ENCODE measurements at regions of chr1 and their contacts with region 1.

Region 1: GRCh38 chr1:89524369-89525168 is at the start of gene LRRC8B:
- DNase-seq: peak; percentile 95 to 97 (median 95)
- ATAC-seq: peak; percentile 99 to 100 (median 100)
- H3K4me3 ChIP-seq: peak within 1 kb of the TSS; percentile 76 to 97 (median 94)
- H3K27ac ChIP-seq: peak within 1 kb of the TSS; percentile 58 to 95 (median 91)
- H3K4me1 ChIP-seq: peaks cover 0 to 46% (median 12%) of the 10 kb centered on the region in 12 donors
- H3K27me3 ChIP-seq: no peaks in the 10 kb centered on the region
- CTCF ChIP-seq: no peak
- POLR2A ChIP-seq: peak in 1 of 2 donors; percentile 73
- total RNA-seq, gene LRRC8B: 3.4 to 10.4 (median 5.0) TPM

Region 2: GRCh38 chr1:89489047-89489729 is 35.4 kb before region 1 on chr1:
- intact Hi-C with region 1: no loop called
- DNase-seq: no peak
- ATAC-seq: no peak
- H3K4me3 ChIP-seq: no peak overlapping the region
- H3K27ac ChIP-seq: no peak overlapping the region
- H3K4me1 ChIP-seq: peaks cover 0 to 12% (median 0%) of the 10 kb centered on the region in 12 donors
- H3K27me3 ChIP-seq: no peaks in the 10 kb centered on the region
- CTCF ChIP-seq: no peak
- POLR2A ChIP-seq: no peak

Region 3: GRCh38 chr1:89567797-89568196 is 43.2 kb after region 1 on chr1:
- intact Hi-C with region 1: loop called in 1 of 10 experiments (anchors 2 kb)
- DNase-seq: no peak
- ATAC-seq: no peak
- H3K4me3 ChIP-seq: peak overlapping the region in 3 of 12 donors; percentile 1 to 10 (median 6)
- H3K27ac ChIP-seq: peak overlapping the region in 4 of 12 donors; percentile 44 to 70 (median 62)
- H3K4me1 ChIP-seq: peaks cover 0 to 27% (median 7%) of the 10 kb centered on the region in 12 donors
- H3K27me3 ChIP-seq: no peaks in the 10 kb centered on the region
- CTCF ChIP-seq: no peak
- POLR2A ChIP-seq: no peak

Region 4: GRCh38 chr1:89598450-89599331 is 74.1 kb after region 1 on chr1:
- intact Hi-C with region 1: loop called in 8 of 10 experiments (anchors 1 to 10 kb)
- DNase-seq: no peak
- ATAC-seq: peak in 3 of 4 donors; percentile 68 to 72 (median 69)
- H3K4me3 ChIP-seq: no peak overlapping the region
- H3K27ac ChIP-seq: no peak overlapping the region
- H3K4me1 ChIP-seq: peaks cover 0 to 19% (median 5%) of the 10 kb centered on the region in 12 donors
- H3K27me3 ChIP-seq: no peaks in the 10 kb centered on the region
- CTCF ChIP-seq: peak; percentile 51 to 79 (median 69)
- POLR2A ChIP-seq: no peak

Region 5: DNA sequence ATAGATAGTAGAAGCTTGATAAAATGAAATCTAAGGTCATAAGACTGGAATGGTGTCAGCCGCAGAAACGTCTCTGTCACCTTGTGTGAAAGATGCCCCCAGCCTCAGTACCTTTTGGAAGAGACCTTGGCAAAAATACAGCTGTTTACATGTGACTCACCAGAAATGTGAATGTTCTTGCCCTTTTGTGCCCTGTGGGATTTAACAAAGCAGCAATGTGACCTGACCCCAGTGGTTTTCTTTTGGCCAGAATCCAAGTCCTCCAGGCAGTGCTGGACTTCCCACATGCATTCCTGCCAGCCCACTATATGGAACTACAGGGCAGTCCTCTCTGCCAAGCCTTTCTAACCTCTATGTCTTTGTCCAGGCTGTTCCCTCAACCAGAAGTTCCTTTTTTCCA is 81.1 kb after region 1 on chr1:
- intact Hi-C with region 1: loop called in 3 of 10 experiments (anchors 5 to 10 kb)
- DNase-seq: no peak
- ATAC-seq: no peak
- H3K4me3 ChIP-seq: no peak overlapping the region
- H3K27ac ChIP-seq: peak overlapping the region in 4 of 12 donors; percentile 9 to 26 (median 20)
- H3K4me1 ChIP-seq: peaks cover 13 to 79% (median 58%) of the 10 kb centered on the region in 12 donors
- H3K27me3 ChIP-seq: no peaks in the 10 kb centered on the region
- CTCF ChIP-seq: no peak
- POLR2A ChIP-seq: no peak

Measured in heart left ventricle (tissue), 16 donors.